KBM-7 (cell line): ENCODE measurements at regions of chr7 and their contacts with region 1.

Region 1: DNA sequence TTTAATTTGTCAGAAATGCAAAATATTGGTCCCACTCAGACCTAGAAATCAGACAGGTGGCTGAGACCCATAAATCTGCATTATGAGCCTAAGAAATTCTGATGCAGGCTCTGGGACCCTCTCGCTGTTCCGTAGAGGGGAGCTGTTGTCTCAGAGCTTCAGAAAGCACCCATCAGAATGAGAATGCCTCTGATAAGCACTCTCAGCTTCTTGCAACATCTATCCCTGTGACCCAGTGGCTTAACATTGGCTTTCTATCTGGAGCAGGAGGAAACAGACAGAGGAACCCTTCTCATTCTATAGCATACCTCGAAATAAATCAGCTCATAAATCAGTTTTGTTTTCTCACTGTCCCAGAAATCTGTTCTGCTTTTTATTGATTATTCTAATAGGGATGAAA is 184.6 kb upstream of the SP4 start:
- DNase-seq: no peak

Region 2: DNA sequence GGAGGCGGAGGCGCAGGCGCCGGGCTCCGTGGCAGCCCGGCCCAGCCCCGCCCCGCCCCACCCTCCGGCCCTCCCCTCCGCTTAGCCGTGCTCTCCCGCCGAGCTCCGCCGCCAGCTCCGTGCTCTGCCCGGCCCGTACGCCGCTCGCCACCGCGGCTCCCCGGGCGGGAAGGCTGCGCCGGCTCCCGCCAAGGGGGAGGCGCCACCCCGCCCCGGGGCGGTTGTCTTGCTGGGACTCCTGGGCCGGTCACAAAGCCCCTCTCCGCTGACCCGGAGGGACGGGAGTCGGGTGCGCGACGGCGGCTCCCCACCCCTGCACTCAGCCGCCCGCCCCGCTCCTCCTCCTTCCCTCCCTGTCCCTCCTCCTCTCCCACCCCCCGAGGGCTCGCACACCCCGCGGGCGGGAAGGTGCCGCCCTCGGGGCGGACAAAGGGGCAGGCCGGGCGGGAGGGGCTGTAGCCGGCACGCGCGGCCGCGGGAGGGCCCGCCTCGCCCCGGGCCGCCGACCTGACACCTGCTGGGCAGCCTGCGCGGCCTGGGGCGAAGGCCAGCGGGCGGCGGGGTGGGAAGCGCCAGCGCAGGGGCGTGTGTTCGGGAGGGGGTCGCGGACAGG is 445.1 kb before region 1 on chr7:
- in situ Hi-C with region 1: loop called (anchors 25 kb)
- DNase-seq: peak; percentile 51

Region 3: GRCh38 chr7:21041666-21042065 is 201.6 kb before region 1 on chr7:
- in situ Hi-C with region 1: no loop called
- DNase-seq: no peak